ENCODE measurements at regions of chr7 and their contacts with region 1.

Region 1: DNA sequence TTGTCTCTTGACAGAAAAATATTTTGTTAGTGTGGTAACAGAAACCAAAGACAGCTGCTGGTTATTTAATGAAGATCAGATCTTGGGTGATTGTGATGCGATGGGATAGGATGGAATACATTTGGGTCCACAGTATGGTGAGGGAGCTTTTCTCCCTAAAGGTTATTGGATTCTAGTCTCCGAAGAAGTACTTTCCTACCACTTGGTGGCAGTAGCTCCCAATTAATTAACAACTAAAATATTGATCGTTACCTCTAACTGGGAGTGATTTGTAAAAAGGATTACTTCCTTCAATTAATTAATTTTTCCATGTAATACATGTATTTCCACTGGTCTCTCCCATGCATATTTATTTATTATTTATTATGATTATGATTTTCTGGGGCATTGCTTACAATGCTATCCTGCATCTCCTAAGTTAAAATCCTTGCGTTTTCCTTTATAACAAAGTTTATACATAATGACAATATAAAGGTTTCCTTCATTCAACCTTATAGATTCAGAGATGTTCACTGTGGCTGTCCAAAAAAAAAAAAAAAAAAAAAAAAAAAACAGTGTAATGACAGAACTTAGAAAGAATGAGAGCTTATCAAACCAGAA is 25.6 kb downstream of the TMEM196 start:
- DNase-seq: peak in 1 of 2 experiments; percentile 60
- H3K4me3 ChIP-seq: no peak overlapping the region
- H3K27ac ChIP-seq: no peak overlapping the region
- H3K4me1 ChIP-seq: 0 out of 2 replicates have a peak, but pooled peaks cover 5% of the 10 kb centered on the region
- H3K27me3 ChIP-seq: no peaks in the 10 kb centered on the region
- CTCF ChIP-seq: peak; percentile 94

Region 2: DNA sequence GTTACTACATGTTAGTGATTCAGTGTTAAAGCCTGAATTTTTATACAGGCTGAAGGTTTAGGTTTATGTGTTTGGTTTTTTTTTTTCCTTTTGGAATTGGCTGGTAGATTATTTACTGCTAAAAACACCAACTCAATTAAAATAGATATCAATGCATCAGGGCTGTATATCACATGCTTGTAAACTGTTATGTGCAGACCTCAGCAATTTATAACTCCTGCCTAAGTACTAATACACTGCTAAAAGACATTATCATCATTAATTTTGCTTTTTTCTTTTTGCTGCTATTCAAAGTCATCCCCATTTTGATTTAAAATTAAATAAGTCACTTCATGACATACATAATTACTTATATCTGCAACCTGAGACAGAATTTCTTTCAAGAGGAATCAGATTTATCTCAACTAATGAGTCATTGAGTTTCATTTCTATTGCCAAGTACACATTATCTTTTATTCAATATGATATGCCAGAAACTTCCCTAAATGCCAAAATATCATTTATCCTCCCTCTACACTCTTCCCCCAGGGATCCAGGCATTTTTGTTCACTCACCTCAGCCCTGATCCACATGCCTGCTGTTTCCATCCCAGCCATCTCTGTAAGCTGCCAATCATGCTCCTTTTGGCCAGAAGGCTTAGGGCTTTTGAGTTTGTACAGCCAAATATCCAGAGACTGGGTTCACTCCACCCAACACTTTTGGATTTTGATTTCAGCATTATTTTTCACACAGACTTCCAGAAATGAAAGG is 137.5 kb before region 1 on chr7:
- CTCF ChIA-PET with region 1: no interaction called
- POLR2A ChIA-PET with region 1: no interaction called
- intact Hi-C with region 1: no loop called
- DNase-seq: no peak
- H3K4me3 ChIP-seq: no peak overlapping the region
- H3K27ac ChIP-seq: no peak overlapping the region
- H3K4me1 ChIP-seq: no peaks in the 10 kb centered on the region
- H3K27me3 ChIP-seq: no peaks in the 10 kb centered on the region
- CTCF ChIP-seq: no peak

Region 3: GRCh38 chr7:19762631-19763030 is 14.8 kb after region 1 on chr7:
- CTCF ChIA-PET with region 1: no interaction called
- POLR2A ChIA-PET with region 1: no interaction called
- intact Hi-C with region 1: no loop called
- DNase-seq: no peak
- H3K4me3 ChIP-seq: no peak overlapping the region
- H3K27ac ChIP-seq: no peak overlapping the region
- H3K4me1 ChIP-seq: no peaks in the 10 kb centered on the region
- H3K27me3 ChIP-seq: no peaks in the 10 kb centered on the region
- CTCF ChIP-seq: no peak

Region 4: GRCh38 chr7:20172736-20173334 is 425.0 kb after region 1 on chr7:
- CTCF ChIA-PET with region 1: interaction called, 23 read pairs
- POLR2A ChIA-PET with region 1: no interaction called
- intact Hi-C with region 1: no loop called
- DNase-seq: peak in 1 of 2 experiments; percentile 42
- H3K4me3 ChIP-seq: no peak overlapping the region
- H3K27ac ChIP-seq: no peak overlapping the region
- H3K4me1 ChIP-seq: no peaks in the 10 kb centered on the region
- H3K27me3 ChIP-seq: no peaks in the 10 kb centered on the region
- CTCF ChIP-seq: peak; percentile 65

Region 5: GRCh38 chr7:20310963-20311742 is 563.3 kb after region 1 on chr7:
- CTCF ChIA-PET with region 1: no interaction called
- POLR2A ChIA-PET with region 1: no interaction called
- intact Hi-C with region 1: loop called (anchors 1 kb)
- DNase-seq: peak in 1 of 2 experiments; percentile 56
- H3K4me3 ChIP-seq: no peak overlapping the region
- H3K27ac ChIP-seq: no peak overlapping the region
- H3K4me1 ChIP-seq: no peaks in the 10 kb centered on the region
- H3K27me3 ChIP-seq: no peaks in the 10 kb centered on the region
- CTCF ChIP-seq: peak; percentile 92

Region 6: GRCh38 chr7:20598459-20599309 is 850.8 kb after region 1 on chr7:
- CTCF ChIA-PET with region 1: interaction called, 26 read pairs
- POLR2A ChIA-PET with region 1: interaction called, 3 read pairs
- intact Hi-C with region 1: loop called (anchors 1 kb)
- DNase-seq: peak; percentile 4 to 71
- H3K4me3 ChIP-seq: no peak overlapping the region
- H3K27ac ChIP-seq: no peak overlapping the region
- H3K4me1 ChIP-seq: no peaks in the 10 kb centered on the region; the same call in 1 of the 2 replicates
- H3K27me3 ChIP-seq: no peaks in the 10 kb centered on the region
- CTCF ChIP-seq: peak; percentile 97

Measured in PC-9 (cell line).